Thyroid gland (tissue), 4 donors: ENCODE measurements at regions of chr7 and their contacts with region 1.

Region 1: DNA sequence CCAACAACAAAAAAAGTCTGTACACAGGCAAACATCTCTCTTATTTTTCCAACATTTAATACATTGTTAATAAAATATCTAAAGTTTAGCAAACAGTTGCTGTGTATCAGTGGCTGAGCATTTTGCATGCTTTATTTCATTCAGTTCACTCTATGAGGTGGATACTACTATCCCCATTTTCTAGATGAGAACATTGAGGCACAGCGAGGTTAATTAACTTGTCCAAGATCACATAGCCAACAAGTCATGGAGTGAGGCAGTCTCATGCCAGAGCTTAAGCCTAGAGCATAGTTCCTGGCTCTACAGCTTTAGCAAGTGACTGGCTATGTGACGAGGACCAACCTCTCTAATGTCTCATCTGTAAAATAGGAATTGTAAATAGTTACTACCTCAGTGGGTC is 4.4 kb downstream of the GATAD1 start:
- DNase-seq: no peak
- H3K4me3 ChIP-seq: no peak overlapping the region
- H3K27ac ChIP-seq: no peak overlapping the region
- H3K4me1 ChIP-seq: peaks cover 9 to 10% of the 10 kb centered on the region in 2 donors
- H3K27me3 ChIP-seq: no peaks in the 10 kb centered on the region
- CTCF ChIP-seq: no peak
- POLR2A ChIP-seq: no peak

Region 2: DNA sequence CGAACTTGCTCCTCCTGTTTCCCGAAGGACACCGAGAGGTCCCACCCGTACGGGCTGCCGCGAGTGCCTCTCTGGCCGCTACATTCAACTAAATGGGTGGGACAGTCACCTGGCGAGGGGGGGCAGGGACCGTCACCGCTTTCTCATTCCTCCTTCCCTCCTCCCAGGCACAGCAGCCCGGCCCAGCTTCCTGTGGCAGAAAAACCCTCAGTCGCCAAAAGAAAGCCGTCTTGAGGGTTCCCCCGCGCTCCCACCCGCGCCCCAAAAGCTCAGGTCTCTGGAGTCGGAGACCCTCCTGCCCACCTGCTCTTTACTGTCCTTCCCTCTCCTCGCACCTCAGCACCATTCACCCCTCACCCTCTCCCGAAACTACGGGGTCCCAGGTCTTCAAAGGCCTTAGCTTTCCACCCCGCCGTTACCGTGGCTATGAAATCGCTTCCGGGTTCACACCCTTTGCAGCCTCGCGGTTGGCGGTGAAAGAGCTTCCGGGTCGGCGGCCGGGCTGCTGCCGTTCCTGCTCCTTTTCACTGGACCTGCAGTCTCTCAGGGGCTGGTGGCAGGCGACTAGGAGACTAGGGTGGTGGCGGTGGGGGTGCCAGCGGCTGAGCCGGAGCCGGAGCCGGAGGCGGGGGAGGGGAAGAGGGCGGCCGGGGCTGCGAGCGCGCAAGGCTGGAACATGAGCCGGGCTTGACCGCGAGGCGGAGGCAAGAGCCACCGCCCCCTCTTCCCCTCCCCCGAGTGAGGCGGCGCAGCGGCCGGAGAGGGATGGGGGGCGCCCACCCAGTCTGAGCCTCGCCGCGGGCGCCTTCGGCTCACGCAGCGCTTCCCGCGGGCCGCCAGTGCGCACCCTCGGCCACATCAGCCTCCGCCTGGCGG is 205.9 kb before region 1 on chr7 and contains the starts of genes ANKIB1 and KRIT1:
- intact Hi-C with region 1: loop called (anchors 5 kb)
- DNase-seq: peak; percentile 90 to 91
- H3K4me3 ChIP-seq: peak within 1 kb of the TSS; percentile 77 to 97 (median 92)
- H3K27ac ChIP-seq: peak within 1 kb of the TSS; percentile 77 to 95 (median 86)
- H3K4me1 ChIP-seq: peaks cover 19 to 28% of the 10 kb centered on the region in 2 donors
- H3K27me3 ChIP-seq: no peaks in the 10 kb centered on the region
- CTCF ChIP-seq: peak in 2 of 6 experiments; percentile 15 to 27
- POLR2A ChIP-seq: peak; percentile 15 to 66
- total RNA-seq, gene ANKIB1: 44.1 to 53.3 (median 44.9) TPM
- total RNA-seq, gene KRIT1: 98.9 to 137 (median 111) TPM